Activated T-helper 1 cell treated with anti-CD3 and anti-CD28 coated beads, Interleukin-12 subunit alpha, Interleukin-12 subunit beta, Interleukin-2, Interleukin-4 antibody, amounts not matched to agents 30 ng/mL and 10 ng/mL and 1 ng/mL, durations not matched to agents 14 hours and 24 hours and 36 hours (primary cell): ENCODE measurements at regions of chr3 and their contacts with region 1.

Region 1: DNA sequence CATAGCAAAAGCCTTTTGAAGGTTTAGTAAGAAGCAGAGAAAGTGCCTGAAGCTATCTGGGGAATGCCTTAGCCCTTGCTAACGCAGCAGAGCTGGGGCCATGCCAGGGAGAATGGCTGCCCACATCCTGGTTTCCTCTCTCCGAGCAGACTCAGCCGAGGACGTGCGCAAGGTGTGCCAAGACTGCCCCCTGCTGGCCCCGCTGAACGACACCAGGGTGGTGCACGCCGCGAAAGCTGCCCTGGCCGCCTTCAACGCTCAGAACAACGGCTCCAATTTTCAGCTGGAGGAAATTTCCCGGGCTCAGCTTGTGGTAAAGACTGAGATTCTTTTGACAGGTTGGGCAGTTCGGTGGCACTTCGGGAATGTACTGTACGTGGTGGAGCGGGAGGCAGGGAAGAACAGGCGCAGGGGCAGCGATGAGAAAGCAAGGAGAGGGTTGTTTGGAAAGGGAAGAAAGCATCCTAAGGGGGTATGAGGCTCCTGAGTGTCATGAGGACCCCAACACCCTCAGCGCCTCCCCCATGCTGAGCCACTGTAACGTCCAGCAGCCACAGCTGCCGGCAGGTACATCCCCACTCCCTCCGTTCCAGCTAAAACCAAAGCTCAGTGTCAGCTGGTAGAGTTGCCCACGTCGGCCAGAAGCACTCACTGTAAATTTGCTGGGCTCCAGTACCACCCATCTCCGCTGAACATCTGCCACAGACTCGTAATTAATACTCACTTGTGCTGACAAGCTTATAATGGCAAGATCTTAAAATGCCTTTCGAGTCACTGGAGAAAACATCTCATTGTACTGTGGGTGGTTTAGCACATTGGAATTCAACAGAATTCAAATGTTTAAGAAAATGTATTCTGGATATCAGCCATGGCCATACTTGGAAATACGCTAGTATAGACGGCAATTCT is 4.4 kb downstream of the AHSG start:
- DNase-seq: peak; percentile 79
- H3K4me3 Mint-ChIP-seq: peak overlapping the region; percentile 68
- H3K27ac Mint-ChIP-seq: peak overlapping the region; percentile 6
- H3K4me1 Mint-ChIP-seq: peaks cover 28% of the 10 kb centered on the region
- H3K27me3 Mint-ChIP-seq: peaks cover 48% of the 10 kb centered on the region

Region 2: GRCh38 chr3:185677146-185677829 is 940.0 kb before region 1 on chr3:
- intact Hi-C with region 1: loop called (anchors 5 kb)
- DNase-seq: no peak
- H3K4me3 Mint-ChIP-seq: no peak overlapping the region
- H3K27ac Mint-ChIP-seq: no peak overlapping the region
- H3K4me1 Mint-ChIP-seq: no peaks in the 10 kb centered on the region
- H3K27me3 Mint-ChIP-seq: peaks cover 28% of the 10 kb centered on the region

Region 3: DNA sequence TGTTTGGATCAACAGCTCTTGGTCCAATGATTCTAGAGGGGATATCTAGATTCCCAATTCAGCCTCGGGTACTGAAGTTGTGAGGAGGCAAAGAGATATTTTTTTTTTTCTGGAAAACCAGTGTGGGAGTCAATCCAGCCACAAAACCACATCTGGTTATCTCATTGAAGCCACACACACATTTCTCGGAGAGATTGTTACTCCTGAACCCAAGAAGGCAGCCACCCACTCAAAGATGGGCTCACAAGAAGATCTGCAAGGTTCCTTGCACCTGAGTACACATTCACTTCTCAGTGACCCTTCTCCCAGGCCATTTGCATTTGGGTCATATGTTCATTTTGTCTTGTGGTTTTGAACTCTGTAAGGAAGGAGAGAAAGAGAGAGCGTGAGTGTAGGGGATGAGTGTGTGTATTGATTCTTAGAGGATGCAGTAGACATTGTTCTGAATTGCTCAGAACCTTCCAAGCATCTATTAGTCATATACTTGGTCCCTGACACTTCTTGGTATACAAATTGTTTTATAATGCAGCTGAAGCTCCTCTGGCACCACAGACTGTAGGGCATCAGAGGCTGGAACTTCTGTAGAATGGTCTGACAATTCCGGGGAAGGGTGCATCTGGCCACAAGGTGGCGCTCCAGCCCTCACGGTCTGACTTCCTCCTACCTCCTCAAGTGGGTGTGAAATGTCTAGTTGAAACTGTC is 640.2 kb before region 1 on chr3:
- intact Hi-C with region 1: loop called (anchors 2 kb)
- DNase-seq: peak; percentile 71
- H3K4me3 Mint-ChIP-seq: peak overlapping the region; percentile 11
- H3K27ac Mint-ChIP-seq: peak overlapping the region; percentile 82
- H3K4me1 Mint-ChIP-seq: peaks cover 18% of the 10 kb centered on the region
- H3K27me3 Mint-ChIP-seq: peaks cover 37% of the 10 kb centered on the region

Region 4: GRCh38 chr3:186067360-186068242 is 549.7 kb before region 1 on chr3:
- intact Hi-C with region 1: no loop called
- DNase-seq: no peak
- H3K4me3 Mint-ChIP-seq: peak overlapping the region; percentile 30
- H3K27ac Mint-ChIP-seq: peak overlapping the region; percentile 15
- H3K4me1 Mint-ChIP-seq: peaks cover 26% of the 10 kb centered on the region
- H3K27me3 Mint-ChIP-seq: peaks cover 27% of the 10 kb centered on the region

Region 5: DNA sequence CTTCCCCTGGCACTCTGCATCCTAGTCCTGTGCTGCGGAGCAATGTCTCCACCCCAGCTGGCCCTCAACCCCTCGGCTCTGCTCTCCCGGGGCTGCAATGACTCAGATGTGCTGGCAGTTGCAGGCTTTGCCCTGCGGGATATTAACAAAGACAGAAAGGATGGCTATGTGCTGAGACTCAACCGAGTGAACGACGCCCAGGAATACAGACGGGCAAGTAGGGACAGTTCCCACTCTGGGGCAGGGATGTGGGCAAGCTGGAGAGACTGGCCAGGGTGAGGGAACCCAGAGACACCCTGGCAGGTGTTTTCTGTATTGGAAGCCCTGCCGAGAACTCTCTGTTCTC is 23.2 kb after region 1 on chr3:
- intact Hi-C with region 1: loop called (anchors 1 kb)
- DNase-seq: no peak
- H3K4me3 Mint-ChIP-seq: no peak overlapping the region
- H3K27ac Mint-ChIP-seq: no peak overlapping the region
- H3K4me1 Mint-ChIP-seq: peaks cover 45% of the 10 kb centered on the region
- H3K27me3 Mint-ChIP-seq: peaks cover 12% of the 10 kb centered on the region

Region 6: GRCh38 chr3:186806089-186807055 is 189.1 kb after region 1 on chr3 and contains the start of gene RFC4:
- intact Hi-C with region 1: loop called (anchors 5 kb)
- DNase-seq: peak; percentile 80
- H3K4me3 Mint-ChIP-seq: peak within 1 kb of the TSS; percentile 93
- H3K27ac Mint-ChIP-seq: peak within 1 kb of the TSS; percentile 85
- H3K4me1 Mint-ChIP-seq: peaks cover 31% of the 10 kb centered on the region
- H3K27me3 Mint-ChIP-seq: no peaks in the 10 kb centered on the region
- total RNA-seq, gene RFC4: 111 and 122 TPM in 2 replicates

Region 7: DNA sequence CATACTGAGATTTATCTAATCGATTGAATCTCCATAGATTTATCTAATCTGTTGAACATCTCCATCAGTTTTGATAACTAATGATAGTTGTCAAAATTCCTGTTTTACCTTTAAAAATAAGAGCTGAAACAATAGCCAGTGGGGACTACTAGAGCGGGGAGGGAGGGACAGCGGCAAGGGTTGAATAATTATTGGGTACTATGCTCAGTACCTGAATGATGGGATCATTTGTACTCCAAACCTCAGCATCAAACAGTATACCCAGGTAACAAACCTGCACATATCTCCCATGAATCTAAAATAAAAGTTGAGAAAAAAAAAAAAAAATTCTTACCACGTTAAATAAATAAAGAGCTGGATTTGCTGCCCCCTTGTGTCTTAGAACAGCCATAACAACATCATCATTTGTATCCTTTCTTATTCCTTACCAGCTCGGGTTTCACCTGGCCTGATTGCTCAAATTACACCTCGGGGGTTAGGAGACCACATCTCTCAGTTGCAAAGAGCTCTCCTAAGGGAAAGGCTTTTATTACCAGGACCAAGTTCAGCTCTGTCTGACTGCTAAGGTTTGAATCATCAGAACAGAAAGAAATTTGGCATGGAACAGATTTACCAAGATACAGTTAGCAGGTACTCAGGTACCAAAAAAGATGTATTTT is 547.7 kb after region 1 on chr3:
- intact Hi-C with region 1: loop called (anchors 2 kb)
- DNase-seq: peak; percentile 8
- H3K4me3 Mint-ChIP-seq: no peak overlapping the region
- H3K27ac Mint-ChIP-seq: no peak overlapping the region
- H3K4me1 Mint-ChIP-seq: no peaks in the 10 kb centered on the region
- H3K27me3 Mint-ChIP-seq: peaks cover 25% of the 10 kb centered on the region